Body of pancreas (tissue), 4 donors: ENCODE measurements at regions of chr1 and their contacts with region 1.

Region 1: GRCh38 chr1:112457241-112457640 is 51.5 kb upstream of the WNT2B start:
- DNase-seq: no peak
- ATAC-seq: no peak
- H3K4me3 ChIP-seq: no peak overlapping the region
- H3K27ac ChIP-seq: no peak overlapping the region
- H3K4me1 ChIP-seq: no peaks in the 10 kb centered on the region
- H3K27me3 ChIP-seq: no peaks in the 10 kb centered on the region
- CTCF ChIP-seq: no peak
- POLR2A ChIP-seq: no peak

Region 2: DNA sequence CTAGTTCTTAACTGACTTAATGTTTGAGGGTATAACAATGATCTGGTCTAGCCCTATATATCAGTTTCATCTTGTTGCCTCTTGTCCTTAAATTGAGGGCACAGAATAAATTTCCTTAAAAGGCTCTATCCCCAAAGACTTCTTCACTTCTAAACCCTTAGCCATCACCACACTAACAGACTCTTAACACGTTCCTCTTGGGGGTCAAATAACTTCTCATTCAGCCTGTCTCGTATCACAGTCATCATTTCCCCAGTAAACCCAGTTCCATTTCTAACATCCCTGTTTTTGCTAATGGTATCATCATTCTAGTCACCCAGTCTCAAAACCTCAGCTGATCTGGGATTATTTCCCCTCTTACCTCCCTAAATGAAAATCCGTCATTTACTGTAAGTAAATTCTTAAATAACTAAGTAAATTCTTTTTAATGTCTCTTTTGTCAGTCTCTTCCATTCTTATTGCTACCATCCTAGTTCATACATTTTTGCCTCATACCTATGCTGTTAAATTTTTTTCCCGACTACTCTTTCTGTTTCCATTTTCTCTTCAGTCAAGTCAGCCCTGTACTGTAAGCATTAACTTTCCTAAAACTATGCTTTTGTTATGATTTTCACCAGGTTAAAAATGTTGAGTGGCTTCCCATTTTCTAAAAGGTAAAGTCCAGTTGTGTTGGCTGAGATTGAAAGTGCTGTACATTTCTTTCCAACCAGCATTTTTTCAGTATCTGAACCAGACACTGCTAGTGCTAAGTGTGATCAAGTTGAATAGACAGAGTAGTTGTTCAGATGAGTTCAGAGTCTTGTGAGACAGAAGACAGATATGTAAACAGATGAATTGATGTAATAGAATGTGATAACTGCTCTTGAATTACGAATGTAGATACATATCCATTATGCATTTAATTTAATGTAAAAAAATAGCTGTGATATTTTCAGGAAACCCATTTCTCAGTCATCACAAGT is 54.3 kb before region 1 on chr1:
- intact Hi-C with region 1: loop called (anchors 5 kb)
- DNase-seq: no peak
- ATAC-seq: no peak
- H3K4me3 ChIP-seq: no peak overlapping the region
- H3K27ac ChIP-seq: no peak overlapping the region
- H3K4me1 ChIP-seq: peaks cover 33% of the 10 kb centered on the region
- H3K27me3 ChIP-seq: no peaks in the 10 kb centered on the region
- CTCF ChIP-seq: no peak
- POLR2A ChIP-seq: no peak